AG04449 (cell line): ENCODE measurements at regions of chr1 and their contacts with region 1.

Region 1: DNA sequence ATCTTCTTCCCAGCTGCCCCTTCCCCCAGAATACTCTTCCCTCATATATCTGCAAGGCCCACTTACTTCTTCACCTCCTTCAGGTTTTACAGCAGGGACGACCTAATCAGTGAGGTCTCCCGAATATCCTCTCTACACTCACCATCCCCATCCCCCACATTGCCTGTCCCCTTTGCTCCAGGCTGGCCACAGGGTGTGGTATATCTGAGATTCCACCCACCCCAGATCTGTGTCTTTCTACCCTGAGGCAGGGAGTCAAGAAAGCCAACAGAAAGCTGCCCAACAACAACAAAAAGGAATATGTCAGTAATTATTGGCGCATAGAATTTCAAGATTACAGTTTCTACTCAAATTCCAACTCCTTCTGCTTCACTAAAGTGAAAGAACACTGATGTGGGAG is 30.0 kb upstream of the OPRD1 start:
- DNase-seq: no peak
- H3K4me3 ChIP-seq: no peak overlapping the region
- CTCF ChIP-seq: no peak

Region 2: GRCh38 chr1:28716336-28716735 is 65.7 kb before region 1 on chr1:
- CTCF ChIA-PET with region 1: no interaction called
- POLR2A ChIA-PET with region 1: no interaction called
- DNase-seq: no peak
- H3K4me3 ChIP-seq: no peak overlapping the region
- CTCF ChIP-seq: no peak

Region 3: DNA sequence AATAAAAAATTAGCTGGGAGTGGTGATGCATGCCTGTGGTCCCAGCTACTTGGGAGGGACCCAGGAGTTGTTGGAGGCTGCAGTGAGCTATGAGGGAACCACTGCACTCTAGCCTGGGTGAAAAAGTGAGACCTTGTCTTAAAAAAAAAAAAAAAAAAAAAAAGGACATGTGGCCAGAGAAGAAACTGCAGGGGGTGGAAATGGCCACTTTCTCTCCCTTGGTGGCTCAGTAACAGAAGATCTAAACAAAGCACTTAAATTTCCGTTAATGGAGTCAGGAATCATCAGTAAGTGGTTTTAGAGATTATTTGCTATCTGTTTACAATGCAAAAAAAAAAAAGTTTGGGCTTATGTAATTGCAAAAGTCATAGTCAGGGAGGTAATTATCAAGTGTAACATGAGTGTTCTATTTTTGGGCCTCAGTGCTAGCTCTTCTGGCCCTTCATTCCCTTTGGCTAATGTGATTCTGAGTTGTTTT is 10.7 kb after region 1 on chr1:
- CTCF ChIA-PET with region 1: interaction called, 16 read pairs
- POLR2A ChIA-PET with region 1: no interaction called
- DNase-seq: no peak
- H3K4me3 ChIP-seq: no peak overlapping the region
- CTCF ChIP-seq: no peak

Region 4: DNA sequence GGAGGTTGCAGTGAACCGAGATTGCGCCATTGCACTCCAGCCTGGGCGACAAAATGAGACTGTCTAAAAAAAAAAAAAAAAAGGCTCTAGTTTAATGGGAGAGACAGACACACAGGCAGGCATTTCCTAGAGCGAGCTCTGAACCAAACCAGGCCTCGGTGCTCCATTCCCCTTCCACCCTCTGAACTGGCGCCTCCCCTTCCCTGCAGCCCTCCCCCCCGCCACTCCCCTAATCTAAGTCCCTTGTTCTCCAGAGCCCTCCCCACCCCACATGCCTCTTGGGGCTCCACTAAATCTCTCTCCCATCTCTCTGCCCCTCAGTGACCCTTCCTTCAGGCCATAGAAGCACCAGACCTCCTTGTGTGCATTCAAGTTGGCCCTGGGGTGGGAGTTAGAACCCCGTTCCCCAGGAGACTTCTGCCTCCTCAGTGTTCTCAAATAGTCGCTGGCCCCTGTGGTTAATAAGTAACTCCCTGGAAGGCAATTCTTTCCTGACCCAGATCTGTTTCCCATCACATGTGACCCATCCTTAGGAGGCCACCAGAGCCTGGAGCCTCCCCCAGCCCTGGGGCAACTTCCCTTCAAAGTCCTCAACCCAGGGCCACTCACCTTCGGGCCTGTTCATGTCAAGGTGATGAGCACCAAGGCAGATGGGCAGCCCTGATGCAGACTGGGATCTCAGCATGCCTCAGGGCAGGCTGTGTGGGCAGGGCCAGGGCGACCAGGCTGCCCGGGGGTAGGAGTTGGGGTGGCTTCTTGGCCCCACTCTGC is 89.8 kb after region 1 on chr1:
- CTCF ChIA-PET with region 1: interaction called, 471 read pairs
- POLR2A ChIA-PET with region 1: interaction called, 3 read pairs
- DNase-seq: no peak
- H3K4me3 ChIP-seq: no peak overlapping the region
- CTCF ChIP-seq: no peak